Tibial artery (tissue), 4 donors: ENCODE measurements at regions of chr21 and their contacts with region 1.

Region 1: DNA sequence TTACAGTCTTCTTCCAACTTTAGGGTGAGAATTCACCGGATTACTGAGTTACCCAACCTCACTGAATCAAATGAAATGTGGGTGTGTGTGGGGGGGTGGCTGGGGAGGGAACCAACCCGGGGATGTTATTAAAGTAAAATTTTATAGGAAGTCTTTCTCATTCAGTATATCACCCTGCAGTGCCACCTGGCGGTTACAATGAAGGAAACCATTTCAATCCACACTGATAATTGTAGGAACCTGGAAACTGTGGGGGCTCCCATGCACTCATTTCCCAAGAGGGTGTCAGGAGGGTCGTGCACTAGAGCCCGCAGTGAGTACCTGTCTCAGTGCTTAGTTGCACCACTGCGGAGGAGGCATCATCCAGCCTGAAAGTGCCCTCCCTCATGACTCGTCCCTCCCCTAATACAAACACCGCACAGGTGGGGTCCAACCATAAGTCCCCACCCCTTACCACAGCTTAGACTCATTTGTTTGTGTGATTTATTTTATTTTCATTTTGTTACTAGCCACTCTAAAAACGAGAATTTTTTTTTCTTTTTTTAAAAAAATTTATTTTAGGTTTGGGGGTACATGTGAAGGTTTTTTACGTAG is 29.1 kb upstream of the IGSF5 start:
- DNase-seq: peak in 1 of 2 donors; percentile 50
- H3K4me3 ChIP-seq: no peak overlapping the region
- H3K27ac ChIP-seq: no peak overlapping the region
- H3K4me1 ChIP-seq: no peaks in the 10 kb centered on the region
- H3K27me3 ChIP-seq: peaks cover 0 to 10% of the 10 kb centered on the region in 2 donors
- CTCF ChIP-seq: peak; percentile 46 to 58

Region 2: DNA sequence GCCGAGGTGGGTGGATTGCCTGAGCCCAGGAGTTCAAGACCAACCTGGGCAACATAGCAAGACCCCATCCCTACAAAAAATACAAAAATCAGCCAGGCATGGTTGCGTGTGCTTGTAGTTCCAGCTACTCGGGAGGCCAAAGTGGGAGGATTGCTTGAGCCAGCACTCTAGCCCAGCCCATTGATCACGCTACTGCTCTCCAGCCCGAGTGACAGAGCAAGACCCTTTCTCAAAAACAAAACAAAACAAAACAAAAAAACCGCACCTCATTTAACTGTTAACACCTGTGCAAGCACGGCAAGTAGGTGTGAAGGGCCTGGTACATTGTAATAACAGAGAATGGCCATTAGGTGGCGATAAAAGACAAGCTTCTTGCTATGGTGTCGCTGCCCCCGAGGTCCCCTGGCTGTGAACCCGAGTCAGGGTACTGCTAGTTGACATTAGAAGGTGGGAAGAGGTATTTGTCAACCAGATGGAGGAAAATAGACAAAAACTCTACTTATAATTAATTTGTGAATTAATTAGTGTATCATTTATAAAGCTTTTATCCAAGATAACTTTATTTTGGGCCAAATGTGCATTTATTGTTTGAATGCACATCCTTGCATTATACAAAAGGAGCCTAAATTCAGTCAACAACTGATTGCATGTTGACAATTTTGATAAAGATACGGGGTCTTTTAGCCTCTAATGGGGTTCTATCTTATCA is 197.6 kb before region 1 on chr21:
- intact Hi-C with region 1: loop called (anchors 2 kb)
- DNase-seq: no peak
- H3K4me3 ChIP-seq: no peak overlapping the region
- H3K27ac ChIP-seq: no peak overlapping the region
- H3K4me1 ChIP-seq: peaks cover 0 to 6% (median 2%) of the 10 kb centered on the region in 4 donors
- H3K27me3 ChIP-seq: no peaks in the 10 kb centered on the region
- CTCF ChIP-seq: peak; percentile 76 to 80

Region 3: DNA sequence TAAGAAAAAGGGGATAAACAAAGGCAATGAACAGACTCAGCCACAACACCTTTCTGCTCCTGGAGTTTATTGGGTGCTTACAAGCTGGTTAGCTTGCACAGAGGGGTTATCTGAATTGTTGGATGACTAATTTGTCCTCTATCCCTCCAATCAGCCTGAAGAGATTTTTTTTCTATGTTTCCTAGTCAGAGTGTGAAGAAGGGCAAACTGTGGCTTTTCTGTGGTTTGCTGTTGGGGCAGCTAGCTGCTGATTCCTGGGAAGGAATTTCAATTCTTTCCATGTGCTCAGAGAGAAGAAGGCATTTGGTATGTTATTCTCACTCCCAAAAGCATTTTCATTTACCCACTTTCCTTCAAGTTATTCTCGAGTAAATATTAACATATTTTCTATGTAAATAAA is 200.0 kb after region 1 on chr21:
- intact Hi-C with region 1: no loop called
- DNase-seq: no peak
- H3K4me3 ChIP-seq: no peak overlapping the region
- H3K27ac ChIP-seq: no peak overlapping the region
- H3K4me1 ChIP-seq: no peaks in the 10 kb centered on the region
- H3K27me3 ChIP-seq: no peaks in the 10 kb centered on the region
- CTCF ChIP-seq: no peak